HEK293 (cell line): ENCODE measurements at regions of chr17 and their contacts with region 1.

Region 1: DNA sequence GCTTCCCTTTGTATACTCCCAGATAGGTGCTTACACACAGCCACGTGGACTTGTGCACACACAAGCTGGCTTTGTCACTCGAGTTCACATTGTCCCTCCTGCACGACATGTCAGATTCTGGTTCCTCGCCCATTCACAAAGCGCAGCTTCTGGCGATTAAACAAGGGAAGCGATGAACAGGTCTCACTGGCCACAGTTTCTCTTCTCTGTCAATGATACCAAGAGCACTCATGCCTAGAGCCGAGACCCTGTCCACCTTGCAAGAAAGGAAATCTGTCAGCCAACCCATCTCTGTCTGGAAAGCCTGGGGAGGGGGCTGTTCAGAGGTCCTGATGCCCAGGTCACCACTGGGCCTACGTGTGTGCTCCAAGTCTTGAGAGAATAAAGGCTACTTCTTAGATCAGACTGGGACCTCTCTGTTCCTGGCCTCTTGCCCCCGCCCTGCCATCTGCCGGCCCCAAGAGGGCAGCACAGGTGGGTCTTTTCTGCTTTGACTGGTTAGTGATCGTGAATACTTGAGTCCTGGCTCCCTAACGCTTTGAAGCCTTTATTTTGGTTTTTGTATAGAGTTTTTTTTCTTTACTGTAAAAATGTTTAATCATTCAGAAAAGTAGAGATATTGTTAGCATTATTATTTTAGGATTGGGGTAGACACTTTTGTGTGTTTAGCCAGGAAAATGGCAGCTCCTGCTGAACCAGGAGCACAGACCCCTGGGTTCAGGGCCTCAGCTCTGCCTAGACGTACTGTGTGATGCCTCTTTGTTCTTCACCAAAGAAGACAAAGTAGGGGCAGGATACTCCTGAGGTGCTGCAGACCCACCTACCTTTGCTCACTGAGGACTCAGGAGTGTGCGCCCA is 104.7 kb downstream of the MRM1 start:
- H3K4me3 ChIP-seq: no peak overlapping the region
- H3K27ac ChIP-seq: no peak overlapping the region
- H3K4me1 ChIP-seq: peaks cover 3% of the 10 kb centered on the region; the same call in 1 of the 2 replicates
- CTCF ChIP-seq: peak; percentile 29; the same call in 1 of the 2 replicates

Region 2: DNA sequence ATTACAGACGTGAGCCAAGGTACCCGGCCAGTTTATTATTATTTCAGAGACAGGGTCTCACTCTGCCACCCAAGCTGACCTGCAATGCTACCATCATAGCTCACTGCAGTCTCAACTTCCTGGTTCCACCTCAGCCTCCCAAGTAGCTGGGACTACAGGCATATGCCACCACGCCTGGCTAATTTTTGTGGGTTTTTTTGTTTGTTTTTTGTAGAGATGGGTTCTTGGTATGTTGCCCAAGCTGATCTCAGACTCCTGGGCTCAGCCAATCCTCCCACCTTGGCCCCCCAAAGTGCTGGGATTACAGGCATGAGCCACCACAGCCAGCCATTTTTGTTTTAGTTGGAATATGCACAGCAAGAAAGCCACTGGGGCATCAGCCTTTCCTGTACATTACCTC is 11.0 kb after region 1 on chr17:
- CTCF ChIA-PET with region 1: interaction called, 16 read pairs
- POLR2A ChIA-PET with region 1: interaction called, 4 read pairs
- H3K4me3 ChIP-seq: no peak overlapping the region
- H3K27ac ChIP-seq: no peak overlapping the region
- H3K4me1 ChIP-seq: 0 out of 2 replicates have a peak, but pooled peaks cover 6% of the 10 kb centered on the region
- CTCF ChIP-seq: no peak